ENCODE measurements at regions of chr20 and their contacts with region 1.

Region 1: GRCh38 chr20:21303061-21303871 is at the start of gene XRN2:
- DNase-seq: peak; percentile 92 to 94 (median 92)
- H3K4me3 ChIP-seq: peak within 1 kb of the TSS; percentile 89 to 91
- H3K4me3 Mint-ChIP-seq: peak within 1 kb of the TSS; percentile 91 to 98 (median 97)
- H3K27ac ChIP-seq: peak within 1 kb of the TSS; percentile 91
- H3K27ac Mint-ChIP-seq: peak within 1 kb of the TSS; percentile 98 to 99 (median 99)
- H3K4me1 ChIP-seq: peaks cover 18% of the 10 kb centered on the region
- H3K4me1 Mint-ChIP-seq: peaks cover 23 to 41% (median 28%) of the 10 kb centered on the region in 4 donors
- H3K27me3 ChIP-seq: no peaks in the 10 kb centered on the region
- H3K27me3 Mint-ChIP-seq: peaks cover 0 to 3% of the 10 kb centered on the region in 2 donors
- total RNA-seq, gene XRN2: 52.8 to 56.3 TPM

Region 2: DNA sequence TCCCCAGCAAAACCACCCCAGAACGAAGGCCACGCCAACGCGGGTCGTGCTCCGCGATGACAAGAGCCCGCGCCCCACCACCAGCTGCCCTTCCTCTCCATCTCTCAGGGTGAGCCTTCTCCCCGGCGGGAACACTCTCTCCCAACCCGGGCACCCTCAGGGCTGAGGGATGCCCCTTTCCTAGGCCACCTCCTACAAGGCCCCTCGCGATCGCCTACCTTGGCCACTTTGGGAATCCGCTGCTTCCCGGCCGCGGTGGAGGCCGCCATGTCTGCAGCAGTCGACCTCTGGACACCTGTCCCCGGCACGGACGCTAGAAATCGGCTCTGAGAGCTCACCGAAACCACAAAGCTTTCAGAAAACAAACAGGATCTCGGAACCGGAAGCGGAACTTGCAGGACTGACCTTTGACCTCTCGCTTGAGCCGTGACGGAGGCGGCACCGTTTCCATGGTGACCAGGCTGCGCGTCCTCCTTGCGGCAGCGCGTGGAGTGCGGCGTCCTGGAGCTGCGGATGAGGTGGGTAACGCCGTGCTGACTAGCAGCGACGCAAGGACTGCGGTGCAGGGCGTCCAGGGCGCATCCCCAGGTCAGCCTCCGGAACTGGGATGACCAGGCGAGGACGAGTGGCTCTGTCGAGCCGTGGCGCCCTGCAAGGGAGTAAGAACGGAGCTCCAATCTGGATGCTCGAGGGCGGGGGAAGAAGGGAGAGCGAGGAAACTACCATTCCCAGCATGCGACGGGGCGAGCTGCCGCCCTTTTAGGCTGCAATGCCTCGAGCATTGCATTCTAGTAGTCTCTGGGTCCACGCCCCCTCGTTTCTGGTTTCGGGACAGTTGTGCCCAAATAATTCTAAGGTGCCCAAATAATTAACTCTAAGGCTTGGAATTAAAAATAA is 1250.9 kb before region 1 on chr20 and contains the starts of genes CFAP61 and CRNKL1:
- CTCF ChIA-PET with region 1: no interaction called
- POLR2A ChIA-PET with region 1: interaction called, 4 read pairs
- intact Hi-C with region 1: loop called (anchors 2 kb)
- DNase-seq: peak; percentile 97 to 99 (median 98)
- H3K4me3 ChIP-seq: peak within 1 kb of the TSS; percentile 85 to 98
- H3K4me3 Mint-ChIP-seq: peak within 1 kb of the TSS; percentile 93 to 100 (median 99)
- H3K27ac ChIP-seq: peak within 1 kb of the TSS; percentile 81
- H3K27ac Mint-ChIP-seq: peak within 1 kb of the TSS; percentile 92 to 100 (median 99)
- H3K4me1 ChIP-seq: peaks cover 19% of the 10 kb centered on the region
- H3K4me1 Mint-ChIP-seq: peaks cover 16 to 25% (median 21%) of the 10 kb centered on the region in 4 donors
- H3K27me3 ChIP-seq: peaks cover 7% of the 10 kb centered on the region
- H3K27me3 Mint-ChIP-seq: peaks cover 0 to 4% of the 10 kb centered on the region in 2 donors
- total RNA-seq, gene CFAP61: not detected
- total RNA-seq, gene CRNKL1: 30.0 to 32.9 TPM

Region 3: GRCh38 chr20:21125849-21126580 is 177.3 kb before region 1 on chr20 and contains the start of gene KIZ:
- CTCF ChIA-PET with region 1: no interaction called
- POLR2A ChIA-PET with region 1: interaction called, 12 read pairs
- intact Hi-C with region 1: loop called (anchors 1 kb)
- DNase-seq: peak; percentile 92 to 99 (median 97)
- H3K4me3 ChIP-seq: peak within 1 kb of the TSS; percentile 78 to 81
- H3K4me3 Mint-ChIP-seq: peak within 1 kb of the TSS; percentile 84 to 99 (median 93)
- H3K27ac ChIP-seq: peak within 1 kb of the TSS; percentile 68
- H3K27ac Mint-ChIP-seq: peak within 1 kb of the TSS; percentile 55 to 98 (median 93)
- H3K4me1 ChIP-seq: peaks cover 21% of the 10 kb centered on the region
- H3K4me1 Mint-ChIP-seq: peaks cover 11 to 28% (median 20%) of the 10 kb centered on the region in 4 donors
- H3K27me3 ChIP-seq: no peaks in the 10 kb centered on the region
- H3K27me3 Mint-ChIP-seq: peaks cover 0 to 2% of the 10 kb centered on the region in 2 donors
- total RNA-seq, gene KIZ: 33.7 to 46.3 TPM

Region 4: DNA sequence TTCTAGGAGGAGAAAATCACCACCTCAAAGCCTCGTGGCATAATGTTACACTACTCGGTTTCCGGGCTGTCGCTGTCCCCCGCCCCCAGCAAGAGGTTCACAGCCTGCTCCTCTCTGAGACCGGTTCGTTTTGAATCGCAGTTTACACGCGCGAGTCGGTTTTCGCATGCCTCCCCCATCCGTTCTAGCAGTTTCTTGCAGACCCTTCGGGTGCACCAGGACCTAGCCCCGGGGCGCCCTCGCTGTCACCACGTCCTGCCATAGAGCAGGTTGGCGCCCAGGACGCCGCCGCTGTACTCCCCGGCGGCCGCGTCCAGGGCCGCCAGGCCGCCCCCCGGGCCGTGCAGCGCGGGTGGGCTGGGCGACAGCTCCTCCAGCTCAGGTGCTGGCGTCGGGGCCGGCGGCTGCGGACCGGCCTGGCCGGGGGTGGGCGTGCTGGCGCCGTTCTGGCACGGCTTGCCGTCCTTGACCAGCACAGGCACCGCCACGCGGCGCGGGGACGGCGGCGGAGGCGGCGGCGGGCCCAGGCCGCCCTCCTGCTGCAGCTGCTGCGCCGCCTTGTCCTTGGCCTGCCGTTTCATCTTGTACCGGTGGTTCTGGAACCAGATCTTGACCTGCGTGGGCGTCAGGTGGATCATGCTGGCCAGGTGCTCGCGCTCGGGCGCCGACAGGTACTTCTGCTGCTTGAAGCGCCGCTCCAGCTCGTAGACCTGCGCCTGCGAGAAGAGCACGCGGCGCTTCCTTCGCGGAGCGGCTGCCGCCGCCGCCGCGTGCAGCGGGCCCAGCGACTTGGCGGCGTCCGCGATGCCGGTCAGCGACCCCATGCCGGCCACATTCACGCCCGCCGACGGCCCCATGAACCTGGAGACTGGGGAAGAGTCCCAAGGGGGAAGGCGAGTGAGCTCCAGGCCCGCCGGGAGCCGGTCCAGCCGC is 92.7 kb after region 1 on chr20:
- CTCF ChIA-PET with region 1: no interaction called
- POLR2A ChIA-PET with region 1: interaction called, 3 read pairs
- intact Hi-C with region 1: loop called (anchors 5 kb)
- DNase-seq: peak; percentile 54 to 74 (median 56)
- H3K4me3 ChIP-seq: no peak overlapping the region
- H3K4me3 Mint-ChIP-seq: peak overlapping the region in 7 of 8 donors; percentile 71 to 89 (median 79)
- H3K27ac ChIP-seq: no peak overlapping the region
- H3K27ac Mint-ChIP-seq: peak overlapping the region in 5 of 7 donors; percentile 6 to 88 (median 18)
- H3K4me1 ChIP-seq: peaks cover 20% of the 10 kb centered on the region
- H3K4me1 Mint-ChIP-seq: peaks cover 13 to 25% (median 16%) of the 10 kb centered on the region in 4 donors
- H3K27me3 ChIP-seq: peaks cover 76% of the 10 kb centered on the region
- H3K27me3 Mint-ChIP-seq: peaks cover 49 to 67% of the 10 kb centered on the region in 2 donors

Region 5: DNA sequence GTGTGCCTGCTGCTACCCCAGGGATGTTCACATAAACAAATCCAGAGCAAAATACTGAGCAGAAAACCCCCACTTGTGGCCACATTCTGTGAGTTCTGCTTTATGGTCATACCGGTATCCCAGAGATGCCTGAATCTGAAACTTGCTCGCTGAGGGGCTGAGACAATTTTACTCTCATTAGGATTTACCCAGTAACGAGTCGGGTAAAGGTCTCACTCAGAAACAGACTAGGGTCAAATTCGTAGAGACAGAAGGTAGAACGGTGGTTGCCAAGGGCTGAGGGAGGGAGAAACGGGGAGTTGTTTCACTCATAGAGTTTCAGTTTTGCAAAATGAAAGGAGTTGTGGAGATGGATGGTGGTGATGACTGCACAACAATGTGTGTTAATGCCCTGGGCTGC is 256.0 kb after region 1 on chr20:
- CTCF ChIA-PET with region 1: no interaction called
- POLR2A ChIA-PET with region 1: interaction called, 4 read pairs
- intact Hi-C with region 1: loop called (anchors 5 kb)
- DNase-seq: peak in 1 of 5 donors; percentile 24
- H3K4me3 ChIP-seq: no peak overlapping the region
- H3K4me3 Mint-ChIP-seq: peak overlapping the region; percentile 70 to 89 (median 82)
- H3K27ac ChIP-seq: no peak overlapping the region
- H3K27ac Mint-ChIP-seq: peak overlapping the region; percentile 33 to 91 (median 79)
- H3K4me1 ChIP-seq: peaks cover 55% of the 10 kb centered on the region
- H3K4me1 Mint-ChIP-seq: peaks cover 32 to 58% (median 52%) of the 10 kb centered on the region in 4 donors
- H3K27me3 ChIP-seq: no peaks in the 10 kb centered on the region
- H3K27me3 Mint-ChIP-seq: peaks cover 6 to 8% of the 10 kb centered on the region in 2 donors

Measured in CD4-positive, alpha-beta memory T cell (primary cell).